ENCODE measurements at regions of chr19 and their contacts with region 1.

Region 1: GRCh38 chr19:34501339-34502320 is 20.1 kb downstream of the WTIP start:
- DNase-seq: peak; percentile 90 to 96
- H3K4me3 ChIP-seq: no peak overlapping the region
- H3K4me3 Mint-ChIP-seq: no peak overlapping the region
- H3K27ac Mint-ChIP-seq: peak overlapping the region; percentile 67
- H3K4me1 ChIP-seq: peaks cover 4% of the 10 kb centered on the region; the same call in 1 of the 2 replicates
- H3K4me1 Mint-ChIP-seq: peaks cover 12% of the 10 kb centered on the region
- H3K27me3 ChIP-seq: no peaks in the 10 kb centered on the region
- H3K27me3 Mint-ChIP-seq: no peaks in the 10 kb centered on the region
- CTCF ChIP-seq: peak; percentile 98

Region 2: GRCh38 chr19:34471906-34472700 is 29.5 kb before region 1 on chr19:
- CTCF ChIA-PET with region 1: no interaction called
- POLR2A ChIA-PET with region 1: no interaction called
- intact Hi-C with region 1: loop called (anchors 1 kb)
- DNase-seq: no peak
- H3K4me3 ChIP-seq: no peak overlapping the region
- H3K4me3 Mint-ChIP-seq: no peak overlapping the region
- H3K27ac Mint-ChIP-seq: no peak overlapping the region
- H3K4me1 ChIP-seq: no peaks in the 10 kb centered on the region
- H3K4me1 Mint-ChIP-seq: no peaks in the 10 kb centered on the region
- H3K27me3 ChIP-seq: no peaks in the 10 kb centered on the region
- H3K27me3 Mint-ChIP-seq: no peaks in the 10 kb centered on the region
- CTCF ChIP-seq: no peak

Region 3: DNA sequence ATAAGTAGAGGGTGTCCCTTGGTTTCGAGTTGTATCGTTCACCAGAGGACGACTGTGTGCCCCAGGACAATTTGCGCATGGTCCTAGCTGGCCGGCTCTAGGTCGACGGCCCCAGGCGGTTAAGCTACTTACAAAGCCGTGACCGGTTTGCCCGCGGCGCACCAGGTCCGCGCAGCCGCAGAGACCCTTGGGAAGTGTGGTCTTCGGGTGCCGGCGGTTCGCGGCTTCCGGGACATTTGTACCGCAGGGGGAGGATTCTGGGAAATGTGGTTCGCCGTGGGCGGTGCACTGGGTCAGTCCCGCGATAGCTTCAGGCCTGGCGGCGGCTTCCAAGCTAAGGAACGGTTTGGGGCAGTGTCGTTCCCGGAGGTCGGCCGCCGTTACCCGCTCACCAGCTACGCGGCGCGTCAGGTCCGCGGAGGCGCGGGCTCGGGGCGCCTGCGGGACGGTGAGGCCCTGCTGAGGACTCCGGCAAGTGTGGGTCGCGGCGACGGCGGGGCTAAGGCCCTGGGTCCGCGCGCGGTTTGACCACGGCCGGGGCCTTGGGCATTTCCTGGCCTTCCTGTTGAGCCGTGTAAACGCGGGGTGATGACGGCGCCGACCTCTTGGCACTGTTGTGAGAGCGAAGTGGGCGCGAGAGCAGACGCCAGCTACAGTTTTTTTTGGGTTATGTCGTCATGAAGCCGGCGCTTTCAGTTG is 175.9 kb after region 1 on chr19 and contains the start of gene ZNF302:
- CTCF ChIA-PET with region 1: no interaction called
- POLR2A ChIA-PET with region 1: no interaction called
- intact Hi-C with region 1: no loop called
- DNase-seq: peak; percentile 98
- H3K4me3 ChIP-seq: peak within 1 kb of the TSS; percentile 95
- H3K4me3 Mint-ChIP-seq: peak within 1 kb of the TSS; percentile 96
- H3K27ac Mint-ChIP-seq: peak within 1 kb of the TSS; percentile 99
- H3K4me1 ChIP-seq: peaks cover 16% of the 10 kb centered on the region
- H3K4me1 Mint-ChIP-seq: peaks cover 9% of the 10 kb centered on the region
- H3K27me3 ChIP-seq: no peaks in the 10 kb centered on the region
- H3K27me3 Mint-ChIP-seq: peaks cover 3% of the 10 kb centered on the region
- CTCF ChIP-seq: no peak
- total RNA-seq, gene ZNF302: 28.1 and 30.1 TPM in 2 replicates

Measured in Caco-2 (cell line).